ENCODE measurements at regions of chr15 and their contacts with region 1.

Region 1: DNA sequence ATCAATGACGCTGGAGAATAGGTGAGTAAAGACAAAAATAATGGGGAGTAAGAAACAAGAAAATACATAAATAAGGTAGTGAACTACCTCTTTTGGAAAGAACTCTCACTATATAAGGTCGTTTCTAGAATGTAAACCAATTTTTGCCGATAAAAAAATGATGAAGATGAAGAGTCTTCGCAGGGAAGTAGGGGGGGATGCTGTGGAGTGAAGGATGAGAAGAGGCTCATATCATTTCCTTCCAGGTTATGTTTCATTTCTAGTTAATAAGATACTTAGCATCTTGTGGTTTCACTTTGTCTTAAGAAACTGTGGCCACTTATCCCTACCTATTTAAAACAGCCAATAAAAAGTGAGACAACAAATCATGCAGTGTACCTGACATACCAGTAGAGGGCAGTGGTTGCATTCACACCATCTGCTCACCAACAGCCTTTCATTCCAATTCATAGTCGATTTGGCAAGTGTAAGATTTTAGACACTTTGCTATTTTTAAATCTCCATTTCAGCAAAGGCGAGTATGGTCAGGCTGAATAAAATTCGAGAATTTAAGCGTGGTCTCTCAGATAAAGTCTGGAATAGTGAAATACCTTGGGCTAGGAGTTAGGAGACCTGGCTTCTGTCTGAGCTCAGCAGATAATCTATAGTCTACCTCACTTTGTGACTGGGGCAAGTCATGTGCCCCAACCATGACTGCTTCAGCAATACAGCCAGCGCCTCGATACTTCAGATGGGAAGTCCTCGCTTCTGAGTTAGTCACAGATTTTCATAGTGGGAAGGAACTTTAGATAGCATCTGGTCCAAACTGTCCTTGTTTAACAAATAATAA is 28.9 kb upstream of the ICE2 start:
- DNase-seq: peak; percentile 72
- ATAC-seq: peak; percentile 79
- H3K4me3 ChIP-seq: peak overlapping the region; percentile 68
- H3K27ac ChIP-seq: no peak overlapping the region
- H3K4me1 ChIP-seq: peaks cover 25% of the 10 kb centered on the region
- H3K27me3 ChIP-seq: no peaks in the 10 kb centered on the region
- CTCF ChIP-seq: peak; percentile 89

Region 2: DNA sequence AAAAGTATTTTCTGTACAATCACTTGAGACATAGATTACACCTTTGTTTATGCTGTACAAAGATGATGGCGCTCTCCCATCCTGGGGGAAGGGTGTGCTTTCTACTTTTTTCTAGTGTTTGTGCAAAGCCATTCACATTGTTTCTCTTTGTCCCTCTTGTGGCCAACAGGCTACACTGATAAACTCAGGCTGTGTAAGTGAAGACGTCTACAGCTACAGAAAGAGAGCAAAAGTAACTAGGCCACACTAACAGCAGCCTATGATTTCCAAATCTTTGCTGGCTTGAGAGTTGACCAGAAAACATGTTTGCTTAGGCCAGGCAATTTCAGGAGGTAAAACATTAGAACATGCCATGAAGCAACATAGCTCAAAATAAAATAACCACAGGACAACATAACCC is 428.6 kb before region 1 on chr15:
- CTCF ChIA-PET with region 1: no interaction called
- POLR2A ChIA-PET with region 1: no interaction called
- intact Hi-C with region 1: no loop called
- DNase-seq: peak; percentile 26
- ATAC-seq: no peak; the same call in 1 of the 2 replicates
- H3K4me3 ChIP-seq: no peak overlapping the region
- H3K27ac ChIP-seq: no peak overlapping the region
- H3K4me1 ChIP-seq: peaks cover 21% of the 10 kb centered on the region
- H3K27me3 ChIP-seq: no peaks in the 10 kb centered on the region
- CTCF ChIP-seq: peak; percentile 57

Region 3: DNA sequence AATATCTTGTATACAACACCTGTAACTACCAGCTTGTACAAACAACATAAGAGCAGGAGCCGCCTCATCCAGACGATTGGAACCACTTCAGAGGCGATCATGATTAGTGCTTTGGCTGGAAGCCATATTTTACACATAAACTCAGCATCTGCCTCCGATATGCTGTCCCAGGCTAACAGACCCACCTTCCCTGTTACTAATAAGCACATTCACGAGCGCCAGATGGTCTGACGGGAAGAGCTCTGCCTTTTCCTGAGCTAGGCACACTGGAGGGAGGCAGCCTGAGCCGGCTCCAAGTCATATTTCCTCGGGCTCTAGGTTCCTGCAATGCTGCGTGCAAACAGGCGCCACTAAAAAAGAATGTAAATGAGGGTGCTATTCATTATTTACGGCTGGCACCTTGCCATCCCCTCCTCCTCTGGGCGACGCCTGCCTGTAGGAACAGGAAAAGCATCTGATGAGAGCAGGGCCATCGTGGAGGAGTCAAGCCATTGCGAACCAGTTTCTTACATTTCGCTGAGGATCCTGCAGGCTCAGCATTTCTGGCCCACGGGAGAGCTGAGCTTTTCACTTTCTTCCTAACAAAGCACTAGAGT is 208.3 kb before region 1 on chr15:
- CTCF ChIA-PET with region 1: no interaction called
- POLR2A ChIA-PET with region 1: no interaction called
- intact Hi-C with region 1: no loop called
- DNase-seq: peak; percentile 13
- ATAC-seq: no peak
- H3K4me3 ChIP-seq: no peak overlapping the region
- H3K27ac ChIP-seq: no peak overlapping the region
- H3K4me1 ChIP-seq: no peaks in the 10 kb centered on the region
- H3K27me3 ChIP-seq: no peaks in the 10 kb centered on the region; the same call in 1 of the 2 replicates
- CTCF ChIP-seq: no peak; the same call in 1 of the 2 replicates

Region 4: DNA sequence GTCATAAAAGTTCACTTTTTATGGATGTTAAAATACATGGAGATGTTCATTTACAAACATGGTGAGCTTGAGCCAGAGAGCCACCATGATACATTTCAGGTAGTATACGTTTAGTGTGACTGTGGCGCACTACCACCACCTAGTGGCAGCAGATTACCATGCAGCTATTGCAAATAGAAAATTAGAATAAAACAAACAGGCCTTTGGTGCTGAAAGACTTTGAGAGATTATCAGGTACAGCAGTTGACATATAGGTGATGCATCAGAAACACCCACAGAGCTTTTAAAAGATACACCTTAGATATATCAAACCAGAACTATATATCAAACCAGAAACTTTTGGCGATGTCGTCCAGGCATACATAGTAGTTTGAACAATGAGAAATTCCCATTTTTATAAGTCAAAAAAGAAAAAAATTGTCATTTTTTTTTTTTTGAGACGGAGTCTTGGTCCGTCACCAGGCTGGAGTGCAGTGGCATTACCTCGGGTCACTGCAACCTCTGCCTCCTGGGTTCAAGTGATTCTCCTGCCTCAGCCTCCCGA is 13.1 kb after region 1 on chr15:
- CTCF ChIA-PET with region 1: interaction called, 13 read pairs
- POLR2A ChIA-PET with region 1: no interaction called
- intact Hi-C with region 1: loop called (anchors 1 kb)
- DNase-seq: peak; percentile 74
- ATAC-seq: peak; percentile 51
- H3K4me3 ChIP-seq: 0 out of 2 replicates have a peak overlapping the region, but pooled peaks have one; percentile 46
- H3K27ac ChIP-seq: peak overlapping the region; percentile 98
- H3K4me1 ChIP-seq: peaks cover 60% of the 10 kb centered on the region
- H3K27me3 ChIP-seq: no peaks in the 10 kb centered on the region
- CTCF ChIP-seq: peak; percentile 91

Region 5: GRCh38 chr15:60526127-60526625 is 18.4 kb after region 1 on chr15:
- CTCF ChIA-PET with region 1: interaction called, 13 read pairs
- POLR2A ChIA-PET with region 1: no interaction called
- intact Hi-C with region 1: loop called (anchors 2 kb)
- DNase-seq: peak; percentile 94
- ATAC-seq: peak; percentile 77
- H3K4me3 ChIP-seq: peak overlapping the region; percentile 55
- H3K27ac ChIP-seq: peak overlapping the region; percentile 62
- H3K4me1 ChIP-seq: peaks cover 66% of the 10 kb centered on the region
- H3K27me3 ChIP-seq: no peaks in the 10 kb centered on the region
- CTCF ChIP-seq: no peak

Region 6: DNA sequence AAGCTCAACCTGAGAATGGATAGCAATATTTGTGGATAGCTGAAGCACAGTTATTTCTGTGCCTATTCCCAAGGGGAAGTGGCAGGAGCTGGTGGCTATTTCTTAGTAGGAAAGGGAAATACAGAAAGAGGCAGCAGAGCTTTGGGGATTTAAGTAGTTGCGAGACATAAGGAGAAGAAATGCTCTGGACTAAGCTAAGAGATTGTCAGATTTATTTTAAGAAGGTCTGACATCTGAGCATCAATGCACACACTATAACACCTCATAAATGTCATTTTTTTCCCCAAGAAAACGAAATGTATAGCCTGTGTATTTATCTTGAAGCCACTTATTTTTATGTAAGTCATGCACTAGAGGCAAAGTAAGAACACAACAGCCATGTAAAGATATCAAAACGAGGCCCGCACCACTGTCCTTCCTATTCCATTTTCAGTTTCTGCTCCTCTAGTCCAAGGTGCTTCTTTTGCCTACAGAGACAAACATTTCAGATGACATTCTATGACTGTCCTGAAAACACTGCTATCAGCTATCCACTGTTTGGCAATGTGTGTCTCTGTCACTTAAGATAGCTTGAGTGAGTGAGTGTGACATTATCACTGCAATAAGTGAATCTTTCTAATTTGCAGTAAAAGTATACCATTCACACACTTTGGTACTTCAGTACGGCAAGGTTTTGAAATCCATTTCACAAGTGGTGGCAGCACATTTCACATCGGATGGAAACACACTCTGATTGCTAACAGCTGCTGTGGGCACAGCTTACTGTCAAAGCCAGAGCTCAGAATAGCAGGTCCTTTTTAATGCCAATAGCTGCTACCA is 33.9 kb after region 1 on chr15:
- CTCF ChIA-PET with region 1: no interaction called
- POLR2A ChIA-PET with region 1: no interaction called
- intact Hi-C with region 1: no loop called
- DNase-seq: no peak
- ATAC-seq: no peak
- H3K4me3 ChIP-seq: no peak overlapping the region
- H3K27ac ChIP-seq: no peak overlapping the region
- H3K4me1 ChIP-seq: no peaks in the 10 kb centered on the region
- H3K27me3 ChIP-seq: no peaks in the 10 kb centered on the region
- CTCF ChIP-seq: no peak

Region 7: DNA sequence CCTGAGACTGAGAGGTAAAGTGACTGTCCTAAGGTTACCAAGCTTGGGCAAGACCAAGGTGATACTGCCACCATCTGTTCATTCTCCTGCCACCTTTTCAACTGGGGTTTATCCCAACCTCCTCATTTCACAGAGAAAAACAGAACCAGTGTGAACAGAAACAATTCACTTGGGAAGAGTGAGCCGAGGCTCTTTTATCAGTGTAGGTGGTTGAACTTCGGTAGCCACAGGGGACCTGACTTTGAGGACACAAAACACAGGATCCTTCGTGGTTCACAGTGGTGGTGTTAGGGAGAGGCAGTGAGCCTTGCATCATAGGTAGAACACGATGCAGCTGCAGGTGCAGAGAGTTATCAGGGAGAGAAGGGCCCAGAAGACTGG is 44.0 kb after region 1 on chr15:
- CTCF ChIA-PET with region 1: interaction called, 7 read pairs
- POLR2A ChIA-PET with region 1: no interaction called
- intact Hi-C with region 1: loop called (anchors 1 kb)
- DNase-seq: peak; percentile 52
- ATAC-seq: peak; percentile 84
- H3K4me3 ChIP-seq: no peak overlapping the region
- H3K27ac ChIP-seq: no peak overlapping the region
- H3K4me1 ChIP-seq: no peaks in the 10 kb centered on the region
- H3K27me3 ChIP-seq: peaks cover 32% of the 10 kb centered on the region
- CTCF ChIP-seq: peak; percentile 74

Region 8: DNA sequence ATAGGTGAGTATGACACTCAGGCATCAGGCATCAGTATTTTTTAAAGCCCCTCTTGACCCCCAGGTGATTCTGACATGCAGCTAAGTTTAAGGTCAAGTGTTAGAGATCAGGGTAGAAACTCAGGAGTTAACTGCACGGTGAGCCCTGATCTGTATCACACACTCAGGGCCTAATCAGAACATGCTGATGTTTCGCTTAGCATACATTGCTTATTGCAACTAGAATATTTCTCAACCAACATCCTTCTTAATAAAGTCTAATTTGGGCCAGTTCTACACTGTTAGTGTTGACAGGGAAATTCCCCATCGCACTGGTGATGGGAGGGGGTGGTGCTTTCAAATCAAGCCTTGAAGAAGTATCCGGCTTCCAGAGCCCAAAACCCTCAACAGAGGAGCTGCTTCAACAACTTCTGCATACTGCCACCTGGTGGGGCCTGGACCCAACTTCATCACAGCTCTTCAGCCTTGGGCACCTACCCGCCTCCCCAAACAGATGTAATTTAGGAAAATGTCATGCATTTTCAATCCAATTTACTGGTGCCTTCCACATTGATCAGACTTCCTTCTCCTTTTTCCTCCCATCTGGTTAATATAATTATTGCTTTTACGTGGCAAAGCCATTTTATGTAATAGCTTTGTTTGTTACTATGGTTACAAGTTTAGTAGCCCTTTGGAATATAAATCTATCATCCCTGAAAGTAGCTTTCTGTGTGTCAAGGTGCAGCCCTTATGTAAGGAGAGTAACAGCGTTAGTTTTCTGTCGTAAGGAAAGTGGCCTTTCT is 409.1 kb after region 1 on chr15:
- CTCF ChIA-PET with region 1: no interaction called
- POLR2A ChIA-PET with region 1: no interaction called
- intact Hi-C with region 1: loop called (anchors 2 kb)
- DNase-seq: peak; percentile 68
- ATAC-seq: peak; percentile 75
- H3K4me3 ChIP-seq: no peak overlapping the region
- H3K27ac ChIP-seq: no peak overlapping the region
- H3K4me1 ChIP-seq: no peaks in the 10 kb centered on the region
- H3K27me3 ChIP-seq: peaks cover 29% of the 10 kb centered on the region; the same call in 1 of the 2 replicates
- CTCF ChIP-seq: peak; percentile 74